WTC11 (cell line): ENCODE measurements at regions of chr17 and their contacts with region 1.

Region 1: GRCh38 chr17:73645050-73645978 is 1.1 kb upstream of the SDK2 start:
- DNase-seq: peak; percentile 63
- ATAC-seq: peak; percentile 50
- H3K4me3 Mint-ChIP-seq: peak overlapping the region; percentile 67
- H3K27ac Mint-ChIP-seq: no peak overlapping the region
- H3K4me1 Mint-ChIP-seq: peaks cover 45% of the 10 kb centered on the region
- H3K27me3 Mint-ChIP-seq: peaks cover 74% of the 10 kb centered on the region
- CTCF ChIP-seq: no peak

Region 2: DNA sequence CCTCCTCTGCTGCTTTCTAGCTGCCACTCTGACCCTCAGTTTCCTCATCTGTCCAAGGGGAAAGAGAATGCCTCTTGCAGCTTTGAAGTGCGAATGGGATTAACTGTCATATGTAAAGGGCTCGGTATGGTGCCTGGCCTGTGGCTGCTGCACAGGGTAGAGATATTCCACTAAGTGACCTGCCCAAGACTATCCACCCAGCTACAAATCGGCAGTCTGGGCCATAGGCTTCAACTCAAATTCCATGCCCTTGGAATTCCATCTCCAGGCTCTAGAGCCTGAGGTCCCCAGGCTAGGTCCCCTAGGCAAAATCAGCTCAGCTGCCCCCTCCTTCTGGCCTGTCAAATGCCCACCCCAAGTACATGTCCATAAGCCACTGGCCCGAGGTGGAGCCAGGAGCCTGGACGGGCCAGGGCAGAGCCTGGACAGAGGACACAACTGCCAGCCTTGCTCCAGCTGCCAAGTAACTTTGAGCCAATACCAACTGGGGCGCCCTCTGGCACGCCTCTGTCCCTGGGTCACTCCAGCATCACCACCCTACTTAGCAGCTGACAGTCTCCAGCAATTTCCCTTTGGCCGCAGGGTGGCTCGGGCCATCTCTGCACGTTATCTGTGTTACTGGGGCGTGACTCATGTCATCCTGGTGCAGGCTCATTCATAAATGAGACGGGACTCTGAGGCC is 58.3 kb before region 1 on chr17:
- CTCF ChIA-PET with region 1: interaction called, 31 read pairs
- POLR2A ChIA-PET with region 1: interaction called, 4 read pairs
- DNase-seq: no peak
- ATAC-seq: no peak
- H3K4me3 Mint-ChIP-seq: no peak overlapping the region
- H3K27ac Mint-ChIP-seq: no peak overlapping the region
- H3K4me1 Mint-ChIP-seq: peaks cover 51% of the 10 kb centered on the region
- H3K27me3 Mint-ChIP-seq: no peaks in the 10 kb centered on the region
- CTCF ChIP-seq: no peak

Region 3: DNA sequence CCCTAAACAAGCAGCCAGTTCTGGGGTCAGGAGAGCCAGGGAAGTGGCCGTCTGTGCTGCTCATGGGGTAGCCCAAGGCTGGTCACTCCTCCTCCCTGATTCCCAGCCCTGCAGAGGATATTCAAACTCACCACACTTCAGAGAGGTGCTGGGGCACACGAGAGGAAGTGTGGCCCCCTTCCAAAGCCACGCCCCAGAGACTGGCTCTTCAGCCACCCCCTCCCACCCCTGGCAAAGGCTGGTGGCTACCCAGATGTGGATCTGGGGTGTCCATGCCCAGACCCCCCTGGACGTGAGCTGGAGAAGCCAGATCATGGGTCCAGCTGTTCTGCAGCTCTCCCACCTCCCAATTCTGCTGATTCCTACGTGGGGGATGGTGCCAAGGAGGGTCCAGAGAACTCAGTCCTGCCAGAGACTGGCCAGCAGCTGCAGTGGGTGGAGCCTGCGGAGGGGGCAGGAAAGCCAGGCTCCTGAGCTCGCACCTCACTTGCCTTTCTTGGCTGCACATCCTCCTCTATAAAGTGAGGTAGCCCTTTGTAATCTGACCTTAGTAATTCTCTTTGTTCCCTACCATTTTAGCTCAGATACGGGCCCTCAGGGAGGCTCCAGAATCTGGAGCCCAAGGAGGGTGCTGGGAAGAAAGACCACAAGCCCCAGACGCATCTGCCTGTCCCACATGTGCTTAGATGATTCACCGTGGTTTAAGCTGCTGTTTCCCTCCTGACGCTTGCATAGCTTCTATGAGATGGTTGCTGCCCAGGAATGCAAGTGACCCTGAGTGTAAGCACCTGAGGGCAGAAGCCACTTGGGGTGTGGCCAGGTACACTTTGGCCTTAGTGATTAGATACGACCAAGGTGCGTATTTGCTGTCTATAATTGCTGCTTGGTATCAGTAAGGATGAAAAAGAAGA is 16.4 kb before region 1 on chr17:
- CTCF ChIA-PET with region 1: interaction called, 11 read pairs
- POLR2A ChIA-PET with region 1: no interaction called
- DNase-seq: no peak
- ATAC-seq: peak; percentile 58
- H3K4me3 Mint-ChIP-seq: no peak overlapping the region
- H3K27ac Mint-ChIP-seq: no peak overlapping the region
- H3K4me1 Mint-ChIP-seq: peaks cover 46% of the 10 kb centered on the region
- H3K27me3 Mint-ChIP-seq: 0 out of 2 replicates have a peak, but pooled peaks cover under 1% of the 10 kb centered on the region
- CTCF ChIP-seq: no peak

Region 4: GRCh38 chr17:73710095-73710592 is 64.8 kb after region 1 on chr17:
- CTCF ChIA-PET with region 1: interaction called, 45 read pairs
- POLR2A ChIA-PET with region 1: no interaction called
- DNase-seq: peak; percentile 87
- ATAC-seq: peak; percentile 82
- H3K4me3 Mint-ChIP-seq: no peak overlapping the region
- H3K27ac Mint-ChIP-seq: 0 out of 2 replicates have a peak overlapping the region, but pooled peaks have one; percentile 29
- H3K4me1 Mint-ChIP-seq: peaks cover 13% of the 10 kb centered on the region
- H3K27me3 Mint-ChIP-seq: peaks cover 12% of the 10 kb centered on the region; the same call in 1 of the 2 replicates
- CTCF ChIP-seq: peak; percentile 90

Region 5: GRCh38 chr17:73820686-73821448 is 175.6 kb after region 1 on chr17:
- CTCF ChIA-PET with region 1: interaction called, 18 read pairs
- POLR2A ChIA-PET with region 1: no interaction called
- DNase-seq: peak; percentile 67
- ATAC-seq: peak; percentile 93
- H3K4me3 Mint-ChIP-seq: peak overlapping the region; percentile 35; the same call in 1 of the 2 replicates
- H3K27ac Mint-ChIP-seq: no peak overlapping the region
- H3K4me1 Mint-ChIP-seq: peaks cover 47% of the 10 kb centered on the region
- H3K27me3 Mint-ChIP-seq: peaks cover 63% of the 10 kb centered on the region
- CTCF ChIP-seq: no peak